CD8-positive, alpha-beta T cell (primary cell): ENCODE measurements at regions of chr11 and their contacts with region 1.

Region 1: DNA sequence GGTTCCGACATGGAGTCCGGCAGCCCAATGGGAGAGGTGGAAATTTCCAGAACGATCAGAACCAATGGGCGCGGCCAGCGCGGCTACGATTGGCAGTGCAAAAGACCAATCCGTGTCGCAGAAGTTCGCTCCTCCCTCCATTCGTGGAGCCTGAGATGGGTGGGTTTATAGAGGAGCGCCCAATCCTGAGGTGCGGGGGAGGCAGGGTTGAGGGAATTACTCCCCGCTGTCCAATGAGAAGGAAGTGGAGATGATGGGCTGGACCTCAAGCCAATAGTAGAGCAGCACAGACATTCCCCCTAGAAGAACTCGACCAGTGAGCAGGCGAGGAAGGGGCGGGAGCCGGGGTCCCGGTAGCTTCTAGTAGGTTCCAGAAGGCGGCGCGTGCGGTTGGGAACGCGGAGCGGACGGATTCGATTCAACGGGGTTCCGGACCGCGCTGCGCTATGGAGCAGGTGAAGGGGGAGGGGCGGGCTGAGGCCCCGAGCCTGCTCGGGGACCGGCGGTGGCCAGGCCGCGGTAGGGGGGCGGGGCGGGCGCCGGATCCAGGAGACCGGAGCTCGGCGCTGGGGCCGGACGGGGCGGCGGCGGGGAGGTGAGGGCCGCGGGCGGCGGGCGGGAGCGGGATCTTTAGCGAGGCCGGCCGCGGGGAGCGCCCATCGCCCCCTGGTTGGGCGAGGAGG is at the start of gene STIP1:
- DNase-seq: peak; percentile 96 to 100 (median 98)
- ATAC-seq: peak; percentile 87
- H3K4me3 ChIP-seq: peak within 1 kb of the TSS; percentile 79 to 88
- H3K4me3 Mint-ChIP-seq: peak within 1 kb of the TSS; percentile 96
- H3K27ac ChIP-seq: peak within 1 kb of the TSS; percentile 57 to 85
- H3K27ac Mint-ChIP-seq: peak within 1 kb of the TSS; percentile 97
- H3K4me1 ChIP-seq: peaks cover 39% of the 10 kb centered on the region
- H3K4me1 Mint-ChIP-seq: peaks cover 43% of the 10 kb centered on the region
- H3K27me3 ChIP-seq: no peaks in the 10 kb centered on the region
- H3K27me3 Mint-ChIP-seq: no peaks in the 10 kb centered on the region
- CTCF ChIP-seq: peak; percentile 36
- total RNA-seq, gene STIP1: 37.0 to 37.7 TPM

Region 2: GRCh38 chr11:63681321-63682049 is 504.5 kb before region 1 on chr11 and contains the start of gene RTN3:
- CTCF ChIA-PET with region 1: no interaction called
- POLR2A ChIA-PET with region 1: no interaction called
- intact Hi-C with region 1: loop called (anchors 5 to 10 kb)
- DNase-seq: peak; percentile 97 to 99 (median 99)
- ATAC-seq: peak; percentile 88
- H3K4me3 ChIP-seq: peak within 1 kb of the TSS; percentile 79 to 88
- H3K4me3 Mint-ChIP-seq: peak within 1 kb of the TSS; percentile 88
- H3K27ac ChIP-seq: peak within 1 kb of the TSS; percentile 63 to 76
- H3K27ac Mint-ChIP-seq: peak within 1 kb of the TSS; percentile 93
- H3K4me1 ChIP-seq: peaks cover 21% of the 10 kb centered on the region
- H3K4me1 Mint-ChIP-seq: peaks cover 25% of the 10 kb centered on the region
- H3K27me3 ChIP-seq: no peaks in the 10 kb centered on the region
- H3K27me3 Mint-ChIP-seq: no peaks in the 10 kb centered on the region
- CTCF ChIP-seq: peak; percentile 47
- total RNA-seq, gene RTN3: 12.4 to 13.2 TPM

Region 3: GRCh38 chr11:64165849-64166635 is 19.9 kb before region 1 on chr11 and contains the start of gene MACROD1:
- CTCF ChIA-PET with region 1: interaction called, 9 read pairs
- POLR2A ChIA-PET with region 1: interaction called, 8 read pairs
- intact Hi-C with region 1: loop called (anchors 2 kb)
- DNase-seq: peak; percentile 38 to 88 (median 77)
- ATAC-seq: peak; percentile 95
- H3K4me3 ChIP-seq: peak within 1 kb of the TSS; percentile 62 to 78
- H3K4me3 Mint-ChIP-seq: peak within 1 kb of the TSS; percentile 91
- H3K27ac ChIP-seq: peak within 1 kb of the TSS in 1 of 2 experiments; percentile 34
- H3K27ac Mint-ChIP-seq: peak within 1 kb of the TSS; percentile 76
- H3K4me1 ChIP-seq: peaks cover 16% of the 10 kb centered on the region
- H3K4me1 Mint-ChIP-seq: peaks cover 17% of the 10 kb centered on the region
- H3K27me3 ChIP-seq: no peaks in the 10 kb centered on the region
- H3K27me3 Mint-ChIP-seq: no peaks in the 10 kb centered on the region
- CTCF ChIP-seq: no peak
- total RNA-seq, gene MACROD1: 4.5 to 6.8 TPM

Region 4: GRCh38 chr11:64240394-64241174 is 54.6 kb after region 1 on chr11 and contains the start of gene FKBP2:
- CTCF ChIA-PET with region 1: no interaction called
- POLR2A ChIA-PET with region 1: interaction called, 5 read pairs
- intact Hi-C with region 1: loop called in 1 of 2 experiments (anchors 1 kb)
- DNase-seq: peak; percentile 94 to 100 (median 97)
- ATAC-seq: peak; percentile 63
- H3K4me3 ChIP-seq: peak within 1 kb of the TSS; percentile 80 to 97
- H3K4me3 Mint-ChIP-seq: peak within 1 kb of the TSS; percentile 90
- H3K27ac ChIP-seq: peak within 1 kb of the TSS; percentile 94 to 99
- H3K27ac Mint-ChIP-seq: peak within 1 kb of the TSS; percentile 100
- H3K4me1 ChIP-seq: peaks cover 29% of the 10 kb centered on the region
- H3K4me1 Mint-ChIP-seq: peaks cover 34% of the 10 kb centered on the region
- H3K27me3 ChIP-seq: no peaks in the 10 kb centered on the region
- H3K27me3 Mint-ChIP-seq: no peaks in the 10 kb centered on the region
- CTCF ChIP-seq: no peak
- total RNA-seq, gene FKBP2: 19.4 TPM

Region 5: GRCh38 chr11:64284048-64284961 is 98.3 kb after region 1 on chr11 and contains the start of gene BAD:
- CTCF ChIA-PET with region 1: interaction called, 3 read pairs
- POLR2A ChIA-PET with region 1: no interaction called
- intact Hi-C with region 1: loop called (anchors 1 kb)
- DNase-seq: peak; percentile 85 to 95 (median 92)
- ATAC-seq: peak; percentile 77
- H3K4me3 ChIP-seq: peak within 1 kb of the TSS; percentile 73 to 77
- H3K4me3 Mint-ChIP-seq: peak within 1 kb of the TSS; percentile 88
- H3K27ac ChIP-seq: peak within 1 kb of the TSS; percentile 95 to 100
- H3K27ac Mint-ChIP-seq: peak within 1 kb of the TSS; percentile 97
- H3K4me1 ChIP-seq: peaks cover 18% of the 10 kb centered on the region
- H3K4me1 Mint-ChIP-seq: peaks cover 16% of the 10 kb centered on the region
- H3K27me3 ChIP-seq: no peaks in the 10 kb centered on the region
- H3K27me3 Mint-ChIP-seq: no peaks in the 10 kb centered on the region
- CTCF ChIP-seq: no peak
- total RNA-seq, gene BAD: 14.6 to 18.2 TPM